ENCODE measurements at regions of chr2 and their contacts with region 1.

Region 1: GRCh38 chr2:117814417-117815264 is at the start of gene DDX18:
- DNase-seq: peak; percentile 94 to 99
- ATAC-seq: peak; percentile 85 to 95 (median 89)
- H3K4me3 ChIP-seq: peak within 1 kb of the TSS; percentile 82
- H3K4me3 Mint-ChIP-seq: peak within 1 kb of the TSS; percentile 92
- H3K27ac ChIP-seq: peak within 1 kb of the TSS; percentile 98
- H3K27ac Mint-ChIP-seq: peak within 1 kb of the TSS; percentile 88 to 96
- H3K4me1 ChIP-seq: peaks cover 13% of the 10 kb centered on the region
- H3K4me1 Mint-ChIP-seq: peaks cover 23 to 36% of the 10 kb centered on the region in 2 donors
- H3K27me3 ChIP-seq: no peaks in the 10 kb centered on the region
- H3K27me3 Mint-ChIP-seq: peaks cover 0 to 11% of the 10 kb centered on the region in 2 donors
- CTCF ChIP-seq: peak; percentile 98
- total RNA-seq, gene DDX18: 65.2 to 68.6 (median 67.8) TPM

Region 2: GRCh38 chr2:117931978-117932377 is 117.3 kb after region 1 on chr2:
- intact Hi-C with region 1: loop called (anchors 2 kb)
- DNase-seq: no peak
- ATAC-seq: peak in 2 of 3 donors; percentile 48 to 49
- H3K4me3 ChIP-seq: no peak overlapping the region
- H3K4me3 Mint-ChIP-seq: peak overlapping the region; percentile 68
- H3K27ac ChIP-seq: no peak overlapping the region
- H3K27ac Mint-ChIP-seq: peak overlapping the region; percentile 80 to 82
- H3K4me1 ChIP-seq: peaks cover 30% of the 10 kb centered on the region
- H3K4me1 Mint-ChIP-seq: peaks cover 42 to 51% of the 10 kb centered on the region in 2 donors
- H3K27me3 ChIP-seq: no peaks in the 10 kb centered on the region
- H3K27me3 Mint-ChIP-seq: no peaks in the 10 kb centered on the region
- CTCF ChIP-seq: no peak

Region 3: GRCh38 chr2:118003396-118003824 is 188.8 kb after region 1 on chr2:
- intact Hi-C with region 1: loop called (anchors 1 kb)
- DNase-seq: peak in 1 of 2 donors; percentile 87
- ATAC-seq: peak; percentile 94 to 99 (median 98)
- H3K4me3 ChIP-seq: no peak overlapping the region
- H3K4me3 Mint-ChIP-seq: no peak overlapping the region
- H3K27ac ChIP-seq: no peak overlapping the region
- H3K27ac Mint-ChIP-seq: peak overlapping the region; percentile 22 to 60
- H3K4me1 ChIP-seq: peaks cover 6% of the 10 kb centered on the region
- H3K4me1 Mint-ChIP-seq: peaks cover 6 to 12% of the 10 kb centered on the region in 2 donors
- H3K27me3 ChIP-seq: no peaks in the 10 kb centered on the region
- H3K27me3 Mint-ChIP-seq: no peaks in the 10 kb centered on the region
- CTCF ChIP-seq: peak; percentile 84

Region 4: GRCh38 chr2:118088051-118089024 is 273.7 kb after region 1 on chr2 and contains the start of gene INSIG2:
- intact Hi-C with region 1: loop called (anchors 10 kb)
- DNase-seq: peak; percentile 82 to 94
- ATAC-seq: peak; percentile 91 to 96 (median 93)
- H3K4me3 ChIP-seq: peak within 1 kb of the TSS; percentile 82
- H3K4me3 Mint-ChIP-seq: peak within 1 kb of the TSS; percentile 86
- H3K27ac ChIP-seq: peak within 1 kb of the TSS; percentile 81
- H3K27ac Mint-ChIP-seq: peak within 1 kb of the TSS; percentile 59 to 93
- H3K4me1 ChIP-seq: peaks cover 7% of the 10 kb centered on the region
- H3K4me1 Mint-ChIP-seq: peaks cover 4 to 21% of the 10 kb centered on the region in 2 donors
- H3K27me3 ChIP-seq: no peaks in the 10 kb centered on the region
- H3K27me3 Mint-ChIP-seq: peaks cover 8% of the 10 kb centered on the region in 2 donors
- CTCF ChIP-seq: no peak
- total RNA-seq, gene INSIG2: 9.5 to 20.5 (median 13.9) TPM

Region 5: DNA sequence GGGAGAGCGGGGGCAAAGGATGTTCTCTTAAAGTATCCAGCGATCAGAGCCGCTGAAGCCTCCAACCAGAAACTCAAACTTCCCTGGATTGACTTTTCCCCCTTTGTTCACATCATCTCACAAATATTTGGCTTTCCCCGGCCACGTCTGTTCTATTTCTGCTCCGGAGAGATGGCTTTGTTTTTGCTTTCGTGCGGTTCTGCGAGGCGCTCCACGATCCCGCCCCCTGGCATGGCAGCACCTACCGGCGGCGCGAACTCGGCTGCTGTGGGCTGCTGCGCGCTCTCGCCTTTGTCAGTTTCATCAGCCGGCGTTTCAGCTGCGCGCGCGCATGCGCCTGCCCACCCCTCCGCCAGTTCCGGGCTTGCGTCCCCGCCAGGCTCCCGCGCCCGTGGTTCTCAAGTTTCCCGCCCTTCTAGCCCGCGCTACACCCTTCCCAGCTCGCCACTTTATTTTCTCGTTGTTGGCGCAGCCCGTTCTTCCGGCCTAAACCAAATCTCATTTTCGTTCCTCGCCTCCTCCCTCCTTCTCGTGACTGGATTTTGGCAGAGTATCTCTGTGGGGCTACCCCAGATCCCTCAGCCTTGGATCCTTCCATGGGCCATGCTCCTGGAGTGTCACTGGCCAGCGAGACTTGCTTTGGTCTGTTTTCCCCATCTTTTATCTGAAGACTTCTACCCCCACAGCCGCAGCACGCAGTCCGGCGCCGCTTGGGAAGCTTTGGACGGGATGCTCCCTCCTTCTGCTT is 371.6 kb after region 1 on chr2:
- intact Hi-C with region 1: loop called (anchors 1 kb)
- DNase-seq: peak; percentile 83 to 94
- ATAC-seq: peak; percentile 92 to 94 (median 93)
- H3K4me3 ChIP-seq: peak overlapping the region; percentile 88
- H3K4me3 Mint-ChIP-seq: peak overlapping the region; percentile 97
- H3K27ac ChIP-seq: peak overlapping the region; percentile 86
- H3K27ac Mint-ChIP-seq: peak overlapping the region; percentile 93 to 97
- H3K4me1 ChIP-seq: peaks cover 16% of the 10 kb centered on the region
- H3K4me1 Mint-ChIP-seq: peaks cover 18 to 19% of the 10 kb centered on the region in 2 donors
- H3K27me3 ChIP-seq: no peaks in the 10 kb centered on the region
- H3K27me3 Mint-ChIP-seq: peaks cover 0 to 3% of the 10 kb centered on the region in 2 donors
- CTCF ChIP-seq: no peak

Region 6: GRCh38 chr2:119366649-119367471 is 1552.2 kb after region 1 on chr2 and contains the starts of genes C2orf76 and DBI:
- intact Hi-C with region 1: loop called (anchors 10 kb)
- DNase-seq: peak; percentile 91 to 96
- ATAC-seq: peak; percentile 89 to 97 (median 92)
- H3K4me3 ChIP-seq: peak within 1 kb of the TSS; percentile 92
- H3K4me3 Mint-ChIP-seq: peak within 1 kb of the TSS; percentile 95
- H3K27ac ChIP-seq: peak within 1 kb of the TSS; percentile 85
- H3K27ac Mint-ChIP-seq: peak within 1 kb of the TSS; percentile 95 to 100
- H3K4me1 ChIP-seq: peaks cover 25% of the 10 kb centered on the region
- H3K4me1 Mint-ChIP-seq: peaks cover 54 to 86% of the 10 kb centered on the region in 2 donors
- H3K27me3 ChIP-seq: no peaks in the 10 kb centered on the region
- H3K27me3 Mint-ChIP-seq: no peaks in the 10 kb centered on the region
- CTCF ChIP-seq: no peak
- total RNA-seq, gene C2orf76: 14.1 to 21.9 (median 20.5) TPM
- total RNA-seq, gene DBI: 85.1 to 109 (median 93.2) TPM